Ascending aorta (tissue), 2 donors: ENCODE measurements at regions of chr11 and their contacts with region 1.

Region 1: DNA sequence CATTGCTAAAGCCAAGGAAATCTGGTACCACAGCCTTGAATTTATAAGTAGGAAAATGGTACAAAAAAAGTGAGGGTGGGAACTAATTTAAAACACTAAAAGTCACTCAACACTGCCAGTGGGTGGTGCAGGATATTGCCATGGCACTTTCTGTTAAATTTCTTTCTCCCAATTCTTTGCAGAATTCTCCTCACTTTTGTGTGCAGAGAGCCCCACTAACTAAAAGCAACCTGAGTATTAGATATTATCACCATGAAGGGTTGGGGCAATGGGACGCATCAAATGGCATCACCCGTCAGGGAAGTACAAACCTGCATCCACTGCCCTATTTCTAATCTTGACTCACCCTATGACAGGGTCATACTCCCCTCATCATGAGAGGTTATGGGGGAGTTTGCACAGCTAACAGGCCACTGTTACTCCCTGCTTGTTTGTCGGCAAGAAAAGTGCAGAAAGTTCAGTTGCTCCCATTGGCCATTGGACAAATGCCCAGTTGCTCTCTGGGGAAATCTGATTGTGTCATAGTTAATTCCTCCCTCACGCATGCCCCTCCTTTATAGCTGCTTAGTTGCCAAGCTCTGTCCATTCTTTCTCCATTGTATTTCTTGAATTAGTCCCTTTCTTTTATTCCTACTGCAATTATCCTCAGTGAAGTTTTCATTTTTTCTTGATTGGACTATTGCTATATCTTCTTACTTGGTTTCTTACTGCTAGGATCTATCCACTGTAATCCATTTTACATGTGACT is 93.8 kb upstream of the BLID start:
- DNase-seq: peak in 1 of 2 donors; percentile 92
- H3K4me3 ChIP-seq: peak overlapping the region in 1 of 2 donors; percentile 6
- H3K27ac ChIP-seq: peak overlapping the region; percentile 86 to 90
- H3K4me1 ChIP-seq: peaks cover 5 to 62% of the 10 kb centered on the region in 2 donors
- H3K27me3 ChIP-seq: no peaks in the 10 kb centered on the region
- CTCF ChIP-seq: no peak

Region 2: DNA sequence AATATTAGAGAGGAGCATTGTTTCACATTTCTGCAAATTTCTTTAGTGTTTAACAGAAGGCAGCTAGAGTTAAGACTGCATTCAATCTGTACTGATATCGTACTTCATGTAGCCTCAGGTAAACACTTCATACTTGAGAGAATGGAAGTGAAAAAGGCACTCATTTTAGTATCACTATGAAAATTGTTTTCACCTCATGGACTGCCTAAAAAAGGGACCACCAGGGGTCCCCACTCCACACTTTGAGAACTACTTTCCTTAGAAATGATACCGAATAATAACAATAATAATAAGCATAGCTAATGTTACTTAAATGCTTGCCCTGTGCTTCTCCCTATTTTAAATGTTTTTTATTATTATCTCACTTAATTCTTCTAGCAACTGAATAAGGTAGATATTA is 188.9 kb before region 1 on chr11:
- intact Hi-C with region 1: loop called (anchors 5 kb)
- DNase-seq: no peak
- H3K4me3 ChIP-seq: no peak overlapping the region
- H3K27ac ChIP-seq: no peak overlapping the region
- H3K4me1 ChIP-seq: peaks cover 0 to 3% of the 10 kb centered on the region in 2 donors
- H3K27me3 ChIP-seq: no peaks in the 10 kb centered on the region
- CTCF ChIP-seq: peak; percentile 32 to 50 (median 40)

Region 3: GRCh38 chr11:122038543-122038942 is 171.2 kb before region 1 on chr11:
- intact Hi-C with region 1: no loop called
- DNase-seq: no peak
- H3K4me3 ChIP-seq: no peak overlapping the region
- H3K27ac ChIP-seq: peak overlapping the region; percentile 25 to 56
- H3K4me1 ChIP-seq: peaks cover 0 to 21% of the 10 kb centered on the region in 2 donors
- H3K27me3 ChIP-seq: no peaks in the 10 kb centered on the region
- CTCF ChIP-seq: no peak